CD4-positive, alpha-beta T cell (primary cell): ENCODE measurements at regions of chr9 and their contacts with region 1.

Region 1: GRCh38 chr9:133133681-133134418 is 12.8 kb upstream of the RALGDS start:
- DNase-seq: peak; percentile 83 to 98 (median 88)
- ATAC-seq: peak; percentile 80
- H3K4me3 ChIP-seq: peak overlapping the region; percentile 20
- H3K4me3 Mint-ChIP-seq: peak overlapping the region; percentile 87
- H3K27ac ChIP-seq: peak overlapping the region; percentile 98
- H3K27ac Mint-ChIP-seq: peak overlapping the region; percentile 99
- H3K4me1 ChIP-seq: peaks cover 100% of the 10 kb centered on the region
- H3K4me1 Mint-ChIP-seq: peaks cover 70% of the 10 kb centered on the region
- H3K27me3 ChIP-seq: no peaks in the 10 kb centered on the region
- H3K27me3 Mint-ChIP-seq: no peaks in the 10 kb centered on the region
- CTCF ChIP-seq: peak; percentile 9

Region 2: GRCh38 chr9:133115448-133116345 is 18.2 kb before region 1 on chr9:
- CTCF ChIA-PET with region 1: no interaction called
- POLR2A ChIA-PET with region 1: interaction called, 26 read pairs
- intact Hi-C with region 1: no loop called
- DNase-seq: peak in 6 of 14 experiments; percentile 9 to 69 (median 48)
- ATAC-seq: peak; percentile 61
- H3K4me3 ChIP-seq: no peak overlapping the region
- H3K4me3 Mint-ChIP-seq: peak overlapping the region; percentile 30
- H3K27ac ChIP-seq: no peak overlapping the region
- H3K27ac Mint-ChIP-seq: peak overlapping the region; percentile 81
- H3K4me1 ChIP-seq: peaks cover 90% of the 10 kb centered on the region
- H3K4me1 Mint-ChIP-seq: peaks cover 49% of the 10 kb centered on the region
- H3K27me3 ChIP-seq: no peaks in the 10 kb centered on the region
- H3K27me3 Mint-ChIP-seq: no peaks in the 10 kb centered on the region
- CTCF ChIP-seq: no peak

Region 3: GRCh38 chr9:133238851-133239532 is 105.1 kb after region 1 on chr9:
- CTCF ChIA-PET with region 1: no interaction called
- POLR2A ChIA-PET with region 1: no interaction called
- intact Hi-C with region 1: no loop called
- DNase-seq: peak; percentile 32 to 80 (median 61)
- ATAC-seq: peak; percentile 91
- H3K4me3 ChIP-seq: peak overlapping the region; percentile 30
- H3K4me3 Mint-ChIP-seq: peak overlapping the region; percentile 56
- H3K27ac ChIP-seq: no peak overlapping the region
- H3K27ac Mint-ChIP-seq: no peak overlapping the region
- H3K4me1 ChIP-seq: peaks cover 13% of the 10 kb centered on the region
- H3K4me1 Mint-ChIP-seq: peaks cover 10% of the 10 kb centered on the region
- H3K27me3 ChIP-seq: peaks cover 4 to 15% of the 10 kb centered on the region in 2 experiments
- H3K27me3 Mint-ChIP-seq: peaks cover 31% of the 10 kb centered on the region
- CTCF ChIP-seq: peak; percentile 62